ENCODE measurements at regions of chr7 and their contacts with region 1.

Region 1: GRCh38 chr7:142478479-142479072 is 220.7 kb upstream of the PRSS58 start:
- DNase-seq: peak in 1 of 5 donors; percentile 40
- H3K4me3 ChIP-seq: no peak overlapping the region
- H3K4me3 Mint-ChIP-seq: peak overlapping the region in 4 of 7 donors; percentile 22 to 28 (median 26)
- H3K27ac ChIP-seq: no peak overlapping the region
- H3K27ac Mint-ChIP-seq: peak overlapping the region in 6 of 8 donors; percentile 29 to 78 (median 60)
- H3K4me1 ChIP-seq: peaks cover 79% of the 10 kb centered on the region
- H3K4me1 Mint-ChIP-seq: peaks cover 61 to 79% (median 70%) of the 10 kb centered on the region in 3 donors
- H3K27me3 ChIP-seq: no peaks in the 10 kb centered on the region
- H3K27me3 Mint-ChIP-seq: no peaks in the 10 kb centered on the region

Region 2: GRCh38 chr7:142272841-142273240 is 205.7 kb before region 1 on chr7:
- CTCF ChIA-PET with region 1: no interaction called
- POLR2A ChIA-PET with region 1: no interaction called
- DNase-seq: no peak
- H3K4me3 ChIP-seq: no peak overlapping the region
- H3K4me3 Mint-ChIP-seq: no peak overlapping the region
- H3K27ac ChIP-seq: no peak overlapping the region
- H3K27ac Mint-ChIP-seq: no peak overlapping the region
- H3K4me1 ChIP-seq: no peaks in the 10 kb centered on the region
- H3K4me1 Mint-ChIP-seq: no peaks in the 10 kb centered on the region
- H3K27me3 ChIP-seq: no peaks in the 10 kb centered on the region
- H3K27me3 Mint-ChIP-seq: peaks cover 7 to 41% of the 10 kb centered on the region in 2 donors

Region 3: DNA sequence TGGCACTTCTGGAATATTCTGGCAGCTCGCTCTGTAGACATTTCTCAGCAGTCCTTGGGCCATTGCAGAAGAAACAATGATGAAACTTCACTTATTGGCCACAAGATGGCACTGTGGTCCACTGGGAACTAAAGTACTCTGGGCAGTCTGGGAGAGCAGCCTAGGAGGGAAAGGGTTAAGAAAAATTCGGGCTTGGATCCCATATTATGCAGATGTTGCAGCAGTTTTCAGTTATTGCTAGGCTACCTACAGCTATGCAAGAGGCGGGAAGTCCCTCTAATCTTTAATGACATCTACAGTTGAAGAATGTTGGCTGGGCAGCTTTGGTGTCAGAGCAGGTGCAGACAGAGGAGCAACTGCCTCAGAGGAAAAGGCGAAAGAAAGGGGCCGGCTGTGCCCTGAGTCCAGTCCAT is 19.0 kb before region 1 on chr7:
- CTCF ChIA-PET with region 1: interaction called, 55 read pairs
- POLR2A ChIA-PET with region 1: interaction called, 3 read pairs
- DNase-seq: peak in 2 of 5 donors; percentile 25 to 34
- H3K4me3 ChIP-seq: no peak overlapping the region
- H3K4me3 Mint-ChIP-seq: peak overlapping the region in 5 of 7 donors; percentile 21 to 70 (median 42)
- H3K27ac ChIP-seq: no peak overlapping the region
- H3K27ac Mint-ChIP-seq: peak overlapping the region in 5 of 8 donors; percentile 2 to 52 (median 47)
- H3K4me1 ChIP-seq: peaks cover 37% of the 10 kb centered on the region
- H3K4me1 Mint-ChIP-seq: peaks cover 36 to 60% (median 41%) of the 10 kb centered on the region in 3 donors
- H3K27me3 ChIP-seq: no peaks in the 10 kb centered on the region
- H3K27me3 Mint-ChIP-seq: peaks cover 5 to 13% of the 10 kb centered on the region in 2 donors

Region 4: GRCh38 chr7:142496545-142497041 is 18.0 kb after region 1 on chr7:
- CTCF ChIA-PET with region 1: interaction called, 22 read pairs
- POLR2A ChIA-PET with region 1: no interaction called
- DNase-seq: peak in 2 of 5 donors; percentile 22 to 45
- H3K4me3 ChIP-seq: no peak overlapping the region
- H3K4me3 Mint-ChIP-seq: peak overlapping the region in 6 of 7 donors; percentile 35 to 76 (median 54)
- H3K27ac ChIP-seq: no peak overlapping the region
- H3K27ac Mint-ChIP-seq: peak overlapping the region in 4 of 8 donors; percentile 17 to 48 (median 42)
- H3K4me1 ChIP-seq: peaks cover 22% of the 10 kb centered on the region
- H3K4me1 Mint-ChIP-seq: peaks cover 18 to 26% (median 26%) of the 10 kb centered on the region in 3 donors
- H3K27me3 ChIP-seq: no peaks in the 10 kb centered on the region
- H3K27me3 Mint-ChIP-seq: peaks cover 0 to 5% of the 10 kb centered on the region in 2 donors

Measured in CD8-positive, alpha-beta memory T cell (primary cell).